Activated CD8-positive, alpha-beta T cell treated with anti-CD3 and anti-CD28 coated beads for 36 hours (primary cell): ENCODE measurements at regions of chr7 and their contacts with region 1.

Region 1: DNA sequence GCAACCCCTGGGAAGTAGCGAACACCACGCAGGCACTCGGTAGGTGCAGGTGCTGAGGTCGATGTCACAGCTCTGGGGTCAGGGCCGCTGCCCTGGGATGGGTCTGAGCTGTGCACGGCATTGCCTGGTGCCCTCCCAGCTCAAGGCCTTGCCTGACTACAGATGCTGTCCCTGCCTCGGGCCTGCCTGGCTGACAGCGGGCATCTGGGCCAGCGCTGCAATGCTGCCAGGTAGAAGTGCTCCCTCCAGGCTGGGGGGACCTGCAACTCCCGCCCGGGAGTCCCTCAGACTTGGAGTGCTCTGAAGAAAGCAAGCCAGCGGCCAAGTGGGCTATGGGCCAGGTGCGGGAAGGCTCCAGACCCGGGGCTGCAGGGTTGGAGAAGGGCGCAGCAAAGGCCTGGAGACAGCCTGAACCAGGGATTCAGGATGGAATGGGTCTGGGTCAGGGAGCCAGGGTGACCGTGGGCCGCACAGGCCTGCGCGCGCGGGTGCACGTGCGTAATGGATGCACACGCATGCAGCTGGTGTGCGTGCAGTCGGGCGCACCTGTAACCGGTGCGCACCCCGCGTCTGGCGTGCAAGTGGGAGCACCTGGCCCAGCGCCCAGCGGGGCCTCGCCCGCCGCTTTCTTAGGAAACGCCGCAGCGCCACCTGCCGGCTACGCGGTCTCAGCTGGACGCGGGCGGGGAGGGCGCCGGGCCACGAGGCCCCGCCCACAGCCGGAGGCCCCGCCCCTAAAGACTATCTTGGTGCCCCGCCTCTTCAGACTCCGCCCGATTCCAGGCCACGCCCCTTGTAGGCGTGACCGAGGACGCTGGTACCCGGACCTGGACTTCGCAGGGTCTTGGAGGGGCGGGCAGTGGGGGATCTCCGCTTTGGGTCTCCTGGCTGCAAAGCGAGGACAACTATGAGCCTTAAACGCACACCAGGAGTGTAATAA is 46.7 kb downstream of the MICALL2 start:
- DNase-seq: peak; percentile 95
- ATAC-seq: peak; percentile 91
- H3K4me3 Mint-ChIP-seq: no peak overlapping the region
- H3K27ac Mint-ChIP-seq: no peak overlapping the region
- H3K4me1 Mint-ChIP-seq: peaks cover 13% of the 10 kb centered on the region
- H3K27me3 Mint-ChIP-seq: peaks cover 5% of the 10 kb centered on the region
- CTCF ChIP-seq: peak; percentile 87

Region 2: GRCh38 chr7:1065263-1066260 is 347.0 kb before region 1 on chr7:
- CTCF ChIA-PET with region 1: no interaction called
- POLR2A ChIA-PET with region 1: no interaction called
- intact Hi-C with region 1: no loop called
- DNase-seq: peak; percentile 89
- ATAC-seq: peak; percentile 98
- H3K4me3 Mint-ChIP-seq: no peak overlapping the region
- H3K27ac Mint-ChIP-seq: no peak overlapping the region
- H3K4me1 Mint-ChIP-seq: peaks cover 4% of the 10 kb centered on the region
- H3K27me3 Mint-ChIP-seq: no peaks in the 10 kb centered on the region
- CTCF ChIP-seq: peak; percentile 95

Region 3: GRCh38 chr7:1225441-1226185 is 187.0 kb before region 1 on chr7:
- CTCF ChIA-PET with region 1: interaction called, 14 read pairs
- POLR2A ChIA-PET with region 1: no interaction called
- intact Hi-C with region 1: loop called (anchors 5 kb)
- DNase-seq: peak; percentile 60
- ATAC-seq: peak; percentile 76
- H3K4me3 Mint-ChIP-seq: no peak overlapping the region
- H3K27ac Mint-ChIP-seq: no peak overlapping the region
- H3K4me1 Mint-ChIP-seq: peaks cover 6% of the 10 kb centered on the region
- H3K27me3 Mint-ChIP-seq: peaks cover 57% of the 10 kb centered on the region
- CTCF ChIP-seq: peak; percentile 85

Region 4: DNA sequence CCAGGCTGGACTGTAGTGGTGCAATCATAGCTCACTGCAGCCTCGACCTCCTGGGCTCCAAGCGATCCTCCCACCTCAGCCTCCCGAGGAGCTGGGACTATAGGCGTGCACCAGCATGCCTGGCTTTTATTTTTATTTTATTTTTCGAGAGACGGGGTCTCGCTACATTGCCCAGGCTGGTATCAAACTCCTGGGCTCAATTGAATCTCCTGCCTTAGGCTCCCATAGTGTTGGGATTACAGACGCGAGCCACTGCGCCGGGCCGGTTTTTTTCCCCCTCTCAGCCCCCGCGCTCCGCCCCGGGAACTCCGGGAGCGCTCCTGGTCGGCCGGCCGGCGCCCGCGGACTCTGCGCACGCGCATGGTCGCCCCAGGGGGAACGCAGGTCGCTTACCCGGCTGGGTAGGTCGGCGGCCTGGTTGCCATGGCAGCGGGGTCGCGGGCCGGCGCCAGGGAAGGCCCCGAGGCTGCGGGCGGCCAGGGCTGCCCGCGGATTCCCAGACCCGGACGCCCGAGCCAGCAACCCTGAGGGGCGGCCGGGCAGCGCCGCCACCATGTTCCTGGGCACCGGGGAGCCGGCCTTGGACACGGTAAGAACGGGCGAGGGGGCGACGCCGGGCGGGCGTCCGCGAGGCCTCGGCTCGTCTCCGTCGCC is 1146.2 kb after region 1 on chr7 and contains the start of gene IQCE:
- CTCF ChIA-PET with region 1: no interaction called
- POLR2A ChIA-PET with region 1: no interaction called
- intact Hi-C with region 1: no loop called
- DNase-seq: peak; percentile 92
- ATAC-seq: peak; percentile 50
- H3K4me3 Mint-ChIP-seq: peak within 1 kb of the TSS; percentile 76
- H3K27ac Mint-ChIP-seq: peak within 1 kb of the TSS; percentile 59
- H3K4me1 Mint-ChIP-seq: peaks cover 30% of the 10 kb centered on the region
- H3K27me3 Mint-ChIP-seq: no peaks in the 10 kb centered on the region
- CTCF ChIP-seq: no peak
- total RNA-seq, gene IQCE: 4.0 to 4.3 TPM